Colonic mucosa (tissue), 4 donors: ENCODE measurements at regions of chrX and their contacts with region 1.

Region 1: DNA sequence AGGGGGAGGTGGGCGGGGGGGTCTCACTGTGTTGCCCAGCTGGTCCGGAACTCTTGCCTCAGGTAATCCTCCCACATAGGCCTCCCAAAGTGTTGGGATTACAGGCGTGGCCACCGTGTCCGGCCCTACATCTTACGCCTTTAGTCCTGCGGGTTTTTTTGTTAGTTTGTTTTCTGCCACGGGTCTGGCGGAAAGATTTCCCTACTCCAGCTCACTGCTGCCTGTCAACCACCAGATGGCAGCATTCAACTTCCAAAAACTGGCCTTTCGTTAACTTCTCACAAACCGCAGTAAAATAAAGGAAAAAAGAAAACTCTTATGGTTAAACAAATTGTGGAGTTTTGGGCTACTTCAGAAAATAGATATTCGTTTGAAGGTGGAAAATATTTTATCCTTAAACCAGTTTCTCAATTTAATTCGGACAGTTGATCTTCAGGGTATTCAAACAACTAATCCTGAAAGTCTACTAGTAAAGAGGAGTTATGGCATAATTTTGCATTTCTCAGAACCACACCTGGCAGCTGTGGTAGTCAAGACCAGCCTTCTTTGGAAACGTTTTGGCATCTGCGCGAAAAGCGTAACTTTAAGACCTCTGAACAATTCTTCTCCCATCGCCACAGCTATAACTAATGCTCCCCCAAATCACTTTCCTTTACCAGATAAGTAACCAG is 41.1 kb downstream of the LUZP4 start:
- DNase-seq: peak; percentile 28
- H3K4me3 ChIP-seq: no peak overlapping the region
- H3K27ac ChIP-seq: no peak overlapping the region
- H3K4me1 ChIP-seq: no peaks in the 10 kb centered on the region
- H3K27me3 ChIP-seq: no peaks in the 10 kb centered on the region
- CTCF ChIP-seq: peak; percentile 82

Region 2: DNA sequence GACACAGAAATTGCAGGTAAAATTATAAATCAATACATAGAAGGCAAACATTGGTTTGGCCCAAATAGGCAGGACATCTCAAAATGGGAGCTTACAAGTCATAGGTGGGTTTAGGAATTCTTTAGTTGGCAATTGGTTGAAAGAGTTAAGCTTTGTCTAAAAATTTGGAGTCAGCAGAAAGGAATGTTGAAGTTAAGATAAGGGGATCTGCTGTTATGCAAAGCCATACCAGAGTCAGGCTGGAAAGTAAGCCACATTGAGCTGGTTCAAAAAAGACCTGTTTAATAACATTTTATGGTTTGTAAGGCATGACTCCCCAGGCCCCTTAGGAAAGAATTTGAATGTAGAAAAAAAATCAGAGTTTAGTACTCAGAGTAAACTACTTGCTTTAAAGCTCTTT is 405.8 kb before region 1 on chrX:
- intact Hi-C with region 1: no loop called
- DNase-seq: no peak
- H3K4me3 ChIP-seq: no peak overlapping the region
- H3K27ac ChIP-seq: no peak overlapping the region
- H3K4me1 ChIP-seq: no peaks in the 10 kb centered on the region
- H3K27me3 ChIP-seq: no peaks in the 10 kb centered on the region
- CTCF ChIP-seq: no peak

Region 3: GRCh38 chrX:115642895-115643530 is 312.4 kb after region 1 on chrX:
- intact Hi-C with region 1: loop called (anchors 2 kb)
- DNase-seq: peak; percentile 52
- H3K4me3 ChIP-seq: no peak overlapping the region
- H3K27ac ChIP-seq: no peak overlapping the region
- H3K4me1 ChIP-seq: no peaks in the 10 kb centered on the region
- H3K27me3 ChIP-seq: no peaks in the 10 kb centered on the region
- CTCF ChIP-seq: peak; percentile 99

Region 4: GRCh38 chrX:115690511-115691216 is 360.0 kb after region 1 on chrX:
- intact Hi-C with region 1: loop called (anchors 5 kb)
- DNase-seq: peak; percentile 54
- H3K4me3 ChIP-seq: no peak overlapping the region
- H3K27ac ChIP-seq: no peak overlapping the region
- H3K4me1 ChIP-seq: no peaks in the 10 kb centered on the region
- H3K27me3 ChIP-seq: no peaks in the 10 kb centered on the region
- CTCF ChIP-seq: peak; percentile 84